ENCODE measurements at regions of chr19 and their contacts with region 1.

Region 1: DNA sequence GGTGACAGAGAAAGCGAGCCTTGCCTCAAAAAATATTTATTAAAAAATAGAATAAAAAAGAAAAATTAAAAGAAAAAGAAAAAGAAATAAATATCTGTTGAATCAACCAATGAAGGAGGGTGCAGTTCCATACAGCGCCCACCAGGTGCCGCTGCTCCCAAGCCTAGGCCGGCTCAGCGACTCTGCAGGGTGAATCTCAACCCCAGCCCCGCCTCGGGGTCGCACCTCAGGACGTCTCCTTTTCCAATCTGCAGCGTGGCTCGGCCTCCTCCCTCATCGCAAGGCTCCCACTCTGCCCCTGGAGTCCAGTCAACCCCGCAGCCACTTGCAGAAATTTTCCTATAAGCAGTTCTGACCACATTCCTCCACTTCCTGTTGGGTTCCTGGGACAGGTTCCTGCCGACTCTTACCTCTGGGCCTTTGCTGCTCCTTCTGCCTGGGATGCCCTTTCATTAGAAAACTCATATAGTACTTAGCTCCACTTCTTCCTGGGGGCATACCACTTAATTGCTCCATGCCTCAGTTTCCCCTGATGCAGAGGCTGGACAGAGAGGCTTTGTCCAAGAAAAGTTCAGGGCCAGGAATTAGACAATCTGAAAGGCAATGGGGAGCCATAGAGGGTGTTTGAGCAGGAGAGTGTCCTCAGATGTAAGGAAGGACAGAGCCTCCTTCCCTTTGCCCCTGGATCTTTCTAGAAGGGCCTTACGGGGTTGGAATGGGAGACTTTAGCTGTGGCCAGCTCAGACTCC is 24.3 kb downstream of the NFILZ start:
- DNase-seq: peak; percentile 27
- ATAC-seq: peak; percentile 98
- H3K4me3 ChIP-seq: no peak overlapping the region
- H3K27ac ChIP-seq: no peak overlapping the region
- H3K4me1 ChIP-seq: no peaks in the 10 kb centered on the region
- H3K27me3 ChIP-seq: peaks cover 3% of the 10 kb centered on the region; the same call in 1 of the 2 replicates
- CTCF ChIP-seq: peak; percentile 87
- POLR2A ChIP-seq: no peak
- RAD21 ChIP-seq: peak; percentile 77

Region 2: DNA sequence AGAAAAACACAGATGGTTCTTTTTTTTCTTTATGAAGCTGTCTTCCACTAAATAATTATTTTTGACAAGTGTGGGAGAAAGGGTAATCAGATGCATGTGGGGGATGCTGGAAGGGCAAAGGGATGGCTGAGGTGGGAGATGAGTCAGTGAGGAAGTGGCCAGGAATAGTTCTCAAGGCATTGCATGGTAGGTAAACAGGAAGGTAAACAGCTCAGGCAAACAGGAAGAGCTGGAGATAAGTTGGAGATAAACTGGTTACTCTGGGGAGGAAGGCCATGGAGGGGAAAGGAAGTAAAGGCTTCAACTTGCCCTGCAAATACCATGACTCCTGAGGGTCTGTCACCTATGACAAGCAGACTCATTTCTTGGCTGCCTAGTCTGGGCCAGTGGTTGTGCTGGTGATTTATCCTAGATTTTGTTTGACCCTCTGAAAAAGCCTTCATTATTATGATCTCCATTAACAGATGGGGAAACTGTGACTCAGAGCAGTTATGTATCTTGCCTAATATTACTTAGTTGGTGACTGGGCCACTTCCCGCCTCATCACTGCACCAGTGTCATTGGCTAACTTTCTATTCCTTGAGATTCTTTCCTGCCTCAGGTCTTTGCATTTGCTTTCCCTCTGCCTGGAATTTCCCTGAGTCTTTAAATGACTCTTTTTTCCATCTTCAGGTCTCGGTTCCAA is 26.7 kb after region 1 on chr19:
- CTCF ChIA-PET with region 1: no interaction called
- POLR2A ChIA-PET with region 1: interaction called, 11 read pairs
- dilution Hi-C with region 1: no loop called
- in situ Hi-C with region 1: no loop called
- intact Hi-C with region 1: no loop called
- DNase-seq: no peak
- ATAC-seq: no peak
- H3K4me3 ChIP-seq: no peak overlapping the region
- H3K27ac ChIP-seq: no peak overlapping the region
- H3K4me1 ChIP-seq: no peaks in the 10 kb centered on the region
- H3K27me3 ChIP-seq: no peaks in the 10 kb centered on the region
- CTCF ChIP-seq: no peak
- POLR2A ChIP-seq: no peak
- RAD21 ChIP-seq: no peak

Region 3: DNA sequence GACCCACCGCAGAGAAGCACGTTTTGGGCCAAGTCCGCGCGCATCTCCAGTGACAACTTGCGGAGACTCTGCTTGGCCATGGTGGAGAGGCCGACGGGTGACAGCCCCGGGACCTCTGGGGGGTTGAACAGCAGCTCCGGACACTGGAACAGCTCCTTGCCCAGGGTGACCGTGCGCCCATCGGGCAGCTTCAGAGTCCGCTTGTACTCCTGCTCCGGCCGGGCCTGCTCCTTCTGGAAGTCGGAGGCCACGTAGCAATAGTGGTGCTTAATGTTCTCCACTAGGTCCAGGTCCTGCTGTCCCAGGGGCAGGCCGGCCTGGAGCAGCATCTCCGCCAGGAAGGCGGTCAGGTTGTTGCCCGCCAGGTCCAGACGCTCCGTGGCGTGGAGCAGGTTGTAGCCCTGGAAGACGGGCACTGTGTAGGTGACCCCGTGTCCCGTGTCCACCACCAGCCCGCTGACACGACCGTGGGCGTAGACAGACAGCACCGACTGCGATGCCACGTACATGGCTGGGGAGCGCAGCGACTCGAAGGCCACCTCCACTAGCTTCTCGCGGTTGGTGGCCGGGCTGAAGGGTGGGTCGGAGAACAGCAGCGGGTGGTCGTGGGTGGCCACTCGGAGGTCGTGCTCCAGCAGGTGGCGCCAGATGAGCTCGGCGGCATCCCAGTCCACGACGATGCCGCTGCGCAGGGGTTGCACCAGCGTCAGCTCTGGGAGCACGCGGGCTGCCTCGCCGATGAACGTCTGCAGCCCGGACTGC is 43.1 kb after region 1 on chr19:
- CTCF ChIA-PET with region 1: interaction called, 3 read pairs
- POLR2A ChIA-PET with region 1: no interaction called
- dilution Hi-C with region 1: no loop called
- in situ Hi-C with region 1: no loop called
- intact Hi-C with region 1: loop called (anchors 1 kb)
- DNase-seq: no peak
- ATAC-seq: no peak
- H3K4me3 ChIP-seq: no peak overlapping the region
- H3K27ac ChIP-seq: no peak overlapping the region
- H3K4me1 ChIP-seq: no peaks in the 10 kb centered on the region
- H3K27me3 ChIP-seq: no peaks in the 10 kb centered on the region
- CTCF ChIP-seq: no peak
- POLR2A ChIP-seq: no peak
- RAD21 ChIP-seq: no peak

Region 4: DNA sequence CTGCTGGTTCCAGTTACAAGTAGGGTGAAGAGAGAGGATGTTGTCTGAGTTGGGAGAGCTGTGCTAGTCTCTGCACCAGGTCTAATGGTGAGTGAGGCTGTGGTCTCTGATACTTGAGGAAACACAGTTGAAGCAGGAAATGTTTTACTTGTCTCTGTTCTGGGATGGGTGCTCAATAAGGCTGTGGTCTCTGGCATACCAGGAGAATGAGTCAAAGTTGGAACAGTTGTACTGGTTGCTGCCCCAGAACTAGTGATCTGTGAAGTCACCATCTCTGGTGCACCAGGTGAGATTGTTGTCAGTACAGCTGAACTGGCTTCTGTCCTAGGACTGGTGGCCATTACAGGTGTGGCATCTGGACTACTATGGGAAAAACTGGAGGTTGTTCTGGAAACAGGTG is 280.7 kb after region 1 on chr19:
- CTCF ChIA-PET with region 1: no interaction called
- POLR2A ChIA-PET with region 1: no interaction called
- dilution Hi-C with region 1: no loop called
- in situ Hi-C with region 1: no loop called
- intact Hi-C with region 1: no loop called
- DNase-seq: no peak
- ATAC-seq: no peak
- H3K4me3 ChIP-seq: no peak overlapping the region
- H3K27ac ChIP-seq: no peak overlapping the region
- H3K4me1 ChIP-seq: no peaks in the 10 kb centered on the region
- H3K27me3 ChIP-seq: no peaks in the 10 kb centered on the region
- CTCF ChIP-seq: no peak
- POLR2A ChIP-seq: no peak
- RAD21 ChIP-seq: no peak

Region 5: GRCh38 chr19:9075064-9075949 is 420.5 kb after region 1 on chr19:
- CTCF ChIA-PET with region 1: no interaction called
- POLR2A ChIA-PET with region 1: no interaction called
- dilution Hi-C with region 1: no loop called
- in situ Hi-C with region 1: loop called (anchors 25 kb)
- intact Hi-C with region 1: loop called (anchors 1 kb)
- DNase-seq: peak; percentile 83
- ATAC-seq: peak; percentile 78
- H3K4me3 ChIP-seq: no peak overlapping the region
- H3K27ac ChIP-seq: no peak overlapping the region
- H3K4me1 ChIP-seq: no peaks in the 10 kb centered on the region
- H3K27me3 ChIP-seq: no peaks in the 10 kb centered on the region
- CTCF ChIP-seq: no peak
- POLR2A ChIP-seq: no peak
- RAD21 ChIP-seq: no peak

Measured in IMR-90 (cell line).